HepG2 (cell line): ENCODE measurements at regions of chr15 and their contacts with region 1.

Region 1: DNA sequence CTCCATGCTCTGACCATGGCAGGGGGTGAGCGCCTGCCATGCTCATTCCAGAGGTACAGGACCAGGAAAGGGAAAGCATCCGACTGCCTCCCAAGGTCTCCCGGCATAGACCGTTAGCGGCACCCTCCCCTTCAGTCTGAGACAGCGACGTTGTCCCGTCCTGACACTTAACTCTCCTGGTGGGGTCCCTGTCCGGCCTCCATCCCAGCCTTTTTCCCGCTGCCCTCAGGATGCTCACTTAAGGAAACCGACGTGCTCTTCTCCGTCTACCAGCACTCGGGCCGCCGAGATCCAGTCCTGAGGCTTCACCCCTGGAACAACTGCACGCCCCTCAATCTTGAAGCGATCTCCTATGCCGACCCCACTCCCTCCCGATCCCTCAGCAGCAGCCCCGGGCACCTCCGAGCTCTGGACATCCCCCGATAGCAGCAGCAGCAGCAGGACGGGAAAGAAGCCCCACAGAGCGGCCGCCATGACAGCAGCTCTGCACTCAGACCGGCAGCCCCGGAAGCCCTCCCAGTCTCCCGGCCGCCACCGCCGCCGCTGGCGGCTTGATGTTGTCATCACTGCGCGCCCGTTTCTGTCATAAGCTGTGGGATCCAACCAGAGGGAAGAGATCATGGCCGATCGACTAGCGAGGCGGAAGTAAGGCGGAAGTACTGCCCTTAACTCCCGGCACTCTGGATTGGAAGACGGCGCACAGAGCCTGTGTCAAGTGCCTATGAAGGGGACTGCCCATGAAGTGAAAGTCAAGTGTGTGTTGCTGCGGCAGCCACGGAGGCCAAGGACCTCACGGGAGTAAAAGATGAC is at the starts of genes EMC7 and PGBD4:
- DNase-seq: peak; percentile 98
- ATAC-seq: peak; percentile 99
- H3K4me3 ChIP-seq: peak within 1 kb of the TSS; percentile 84 to 95 (median 92)
- H3K27ac ChIP-seq: peak within 1 kb of the TSS; percentile 83
- H3K4me1 ChIP-seq: peaks cover 27% of the 10 kb centered on the region
- H3K27me3 ChIP-seq: peaks cover 0 to 3% of the 10 kb centered on the region in 2 experiments; a peak in 1 of 5 replicates
- CTCF ChIP-seq: peak; percentile 6; the same call in 1 of the 2 replicates
- EP300 ChIP-seq: peak in 1 of 2 experiments; percentile 5; a peak in 1 of 4 replicates
- POLR2A ChIP-seq: peak; percentile 86 to 93
- RAD21 ChIP-seq: no peak
- total RNA-seq, gene EMC7: 29.3 and 46.8 TPM in 2 replicates
- total RNA-seq, gene PGBD4: 1.3 and 1.4 TPM in 2 replicates

Region 2: DNA sequence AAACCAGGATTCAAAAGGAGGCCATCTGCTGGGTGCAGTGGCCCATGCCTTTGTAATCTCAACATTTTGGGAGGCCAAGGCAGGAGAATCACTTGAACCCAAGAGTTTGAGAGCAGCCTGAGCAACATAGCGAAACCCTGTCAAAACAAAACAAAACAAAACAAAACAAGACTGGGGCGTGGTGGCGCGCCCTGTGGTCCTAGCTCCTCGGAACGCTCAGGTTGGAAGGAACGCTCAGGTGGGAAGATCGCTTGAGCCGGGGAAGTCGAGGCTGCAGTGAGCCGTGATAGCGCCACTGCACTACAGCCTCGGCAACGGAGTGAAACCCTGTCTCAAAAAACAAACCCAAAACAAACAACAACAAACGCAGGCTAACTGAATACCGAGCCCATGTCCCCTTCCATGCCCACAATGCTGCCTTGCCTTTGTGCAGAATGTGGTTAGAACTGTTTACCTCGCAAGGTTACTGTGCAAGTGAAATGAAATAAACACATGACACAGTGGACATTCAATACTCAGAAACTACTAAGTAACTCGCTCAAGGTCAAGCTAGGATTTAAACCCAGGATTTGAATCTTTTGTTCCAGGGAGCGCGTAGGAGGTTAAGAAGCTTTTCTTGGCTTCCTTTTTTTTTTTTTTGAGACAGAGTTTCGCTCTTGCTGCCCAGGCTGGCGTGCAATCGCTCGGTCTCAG is 122.5 kb after region 1 on chr15:
- CTCF ChIA-PET with region 1: no interaction called
- POLR2A ChIA-PET with region 1: interaction called, 16 read pairs
- in situ Hi-C with region 1: no loop called
- intact Hi-C with region 1: loop called (anchors 1 kb)
- DNase-seq: no peak
- ATAC-seq: peak; percentile 45
- H3K4me3 ChIP-seq: peak overlapping the region; percentile 93 to 98 (median 96)
- H3K27ac ChIP-seq: peak overlapping the region; percentile 89
- H3K4me1 ChIP-seq: peaks cover 16% of the 10 kb centered on the region; the same call in 1 of the 2 replicates
- H3K27me3 ChIP-seq: no peaks in the 10 kb centered on the region; a peak in 1 of 5 replicates
- CTCF ChIP-seq: 0 out of 2 replicates have a peak, but pooled peaks have one; percentile 31
- EP300 ChIP-seq: no peak
- POLR2A ChIP-seq: no peak
- RAD21 ChIP-seq: no peak